Left colon (tissue), 2 donors: ENCODE measurements at regions of chrX and their contacts with region 1.

Region 1: GRCh38 chrX:109714340-109714958 is 18.6 kb downstream of the ACSL4 start:
- DNase-seq: no peak
- ATAC-seq: no peak

Region 2: GRCh38 chrX:109830704-109831206 is 116.3 kb after region 1 on chrX:
- intact Hi-C with region 1: no loop called
- DNase-seq: no peak
- ATAC-seq: no peak

Region 3: DNA sequence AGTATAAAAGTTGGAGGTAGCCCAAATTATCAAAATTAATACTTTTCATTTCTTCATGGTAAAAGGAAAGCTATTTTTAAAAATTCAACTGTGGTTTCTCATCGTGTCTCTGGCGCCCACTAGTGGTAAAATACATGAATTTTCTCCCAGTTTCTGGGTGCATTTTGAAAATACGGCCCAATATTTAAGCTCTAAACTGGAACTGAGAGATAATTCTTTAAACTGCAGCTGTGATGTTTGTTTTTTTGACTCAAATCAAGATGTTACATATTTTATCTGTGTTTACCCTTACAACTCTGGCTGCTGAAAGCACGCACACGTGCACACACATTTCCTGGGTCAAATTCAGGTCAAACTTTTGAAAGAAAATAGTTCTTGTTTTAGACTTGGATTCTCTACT is 142.5 kb after region 1 on chrX:
- intact Hi-C with region 1: loop called in 1 of 2 experiments (anchors 5 kb)
- DNase-seq: no peak
- ATAC-seq: no peak